ENCODE measurements at regions of chr2 and their contacts with region 1.

Region 1: GRCh38 chr2:234446404-234447076 is 50.3 kb downstream of the ARL4C start:
- DNase-seq: peak; percentile 58 to 89 (median 85)
- ATAC-seq: peak; percentile 92
- H3K4me3 ChIP-seq: peak overlapping the region; percentile 29
- H3K4me3 Mint-ChIP-seq: peak overlapping the region; percentile 71 to 99 (median 86)
- H3K27ac ChIP-seq: peak overlapping the region; percentile 96
- H3K27ac Mint-ChIP-seq: peak overlapping the region; percentile 96 to 100 (median 100)
- H3K4me1 ChIP-seq: peaks cover 57 to 93% of the 10 kb centered on the region in 2 donors
- H3K4me1 Mint-ChIP-seq: peaks cover 60 to 98% (median 89%) of the 10 kb centered on the region in 7 donors
- H3K27me3 ChIP-seq: no peaks in the 10 kb centered on the region
- H3K27me3 Mint-ChIP-seq: no peaks in the 10 kb centered on the region

Region 2: GRCh38 chr2:234044157-234044556 is 402.4 kb before region 1 on chr2:
- CTCF ChIA-PET with region 1: no interaction called
- POLR2A ChIA-PET with region 1: no interaction called
- intact Hi-C with region 1: no loop called
- DNase-seq: no peak
- ATAC-seq: no peak
- H3K4me3 ChIP-seq: no peak overlapping the region
- H3K4me3 Mint-ChIP-seq: no peak overlapping the region
- H3K27ac ChIP-seq: no peak overlapping the region
- H3K27ac Mint-ChIP-seq: no peak overlapping the region
- H3K4me1 ChIP-seq: no peaks in the 10 kb centered on the region
- H3K4me1 Mint-ChIP-seq: peaks cover 0 to 4% (median 0%) of the 10 kb centered on the region in 7 donors
- H3K27me3 ChIP-seq: no peaks in the 10 kb centered on the region
- H3K27me3 Mint-ChIP-seq: peaks cover 0 to 62% (median 0%) of the 10 kb centered on the region in 5 donors

Region 3: GRCh38 chr2:234241656-234242458 is 204.7 kb before region 1 on chr2:
- CTCF ChIA-PET with region 1: no interaction called
- POLR2A ChIA-PET with region 1: no interaction called
- intact Hi-C with region 1: no loop called
- DNase-seq: no peak
- ATAC-seq: no peak
- H3K4me3 ChIP-seq: no peak overlapping the region
- H3K4me3 Mint-ChIP-seq: no peak overlapping the region
- H3K27ac ChIP-seq: no peak overlapping the region
- H3K27ac Mint-ChIP-seq: peak overlapping the region in 1 of 9 donors; percentile 41
- H3K4me1 ChIP-seq: peaks cover 5 to 9% of the 10 kb centered on the region in 2 donors
- H3K4me1 Mint-ChIP-seq: peaks cover 9 to 26% (median 16%) of the 10 kb centered on the region in 7 donors
- H3K27me3 ChIP-seq: no peaks in the 10 kb centered on the region
- H3K27me3 Mint-ChIP-seq: no peaks in the 10 kb centered on the region

Region 4: GRCh38 chr2:234278556-234279255 is 167.8 kb before region 1 on chr2:
- CTCF ChIA-PET with region 1: interaction called, 3 read pairs
- POLR2A ChIA-PET with region 1: interaction called, 270 read pairs
- intact Hi-C with region 1: no loop called
- DNase-seq: peak in 7 of 9 donors; percentile 28 to 77 (median 69)
- ATAC-seq: peak; percentile 81
- H3K4me3 ChIP-seq: no peak overlapping the region
- H3K4me3 Mint-ChIP-seq: peak overlapping the region in 9 of 10 donors; percentile 0 to 64 (median 52)
- H3K27ac ChIP-seq: no peak overlapping the region
- H3K27ac Mint-ChIP-seq: peak overlapping the region; percentile 38 to 90 (median 77)
- H3K4me1 ChIP-seq: peaks cover 16 to 42% of the 10 kb centered on the region in 2 donors
- H3K4me1 Mint-ChIP-seq: peaks cover 27 to 75% (median 59%) of the 10 kb centered on the region in 7 donors
- H3K27me3 ChIP-seq: no peaks in the 10 kb centered on the region
- H3K27me3 Mint-ChIP-seq: no peaks in the 10 kb centered on the region

Region 5: DNA sequence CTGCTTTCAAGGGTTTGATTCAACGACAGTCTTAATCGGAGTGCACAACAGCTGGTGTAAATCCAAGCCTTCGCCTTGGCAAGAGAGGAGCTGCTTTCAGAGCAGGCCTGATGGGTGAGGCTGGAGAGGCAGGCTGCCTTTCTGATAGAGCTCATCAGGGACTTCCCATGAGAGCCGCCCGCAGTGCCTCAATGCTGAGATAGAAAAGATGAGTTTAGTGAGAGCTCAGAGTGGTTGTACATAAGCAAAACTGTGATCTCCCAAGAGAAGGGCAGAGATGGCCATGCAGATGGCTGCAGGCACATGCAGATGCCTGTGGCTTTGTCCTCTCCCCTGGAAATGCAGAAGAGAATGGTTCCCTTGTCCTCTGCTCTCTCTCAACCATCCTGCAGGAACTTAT is 71.8 kb before region 1 on chr2:
- CTCF ChIA-PET with region 1: interaction called, 6 read pairs
- POLR2A ChIA-PET with region 1: interaction called, 22 read pairs
- intact Hi-C with region 1: loop called in 1 of 2 experiments (anchors 1 kb)
- DNase-seq: no peak
- ATAC-seq: no peak
- H3K4me3 ChIP-seq: no peak overlapping the region
- H3K4me3 Mint-ChIP-seq: peak overlapping the region in 2 of 10 donors; percentile 35 to 76
- H3K27ac ChIP-seq: no peak overlapping the region
- H3K27ac Mint-ChIP-seq: peak overlapping the region; percentile 57 to 98 (median 94)
- H3K4me1 ChIP-seq: peaks cover 7 to 47% of the 10 kb centered on the region in 2 donors
- H3K4me1 Mint-ChIP-seq: peaks cover 26 to 74% (median 62%) of the 10 kb centered on the region in 7 donors
- H3K27me3 ChIP-seq: no peaks in the 10 kb centered on the region
- H3K27me3 Mint-ChIP-seq: no peaks in the 10 kb centered on the region

Region 6: GRCh38 chr2:234483568-234484251 is 37.2 kb after region 1 on chr2:
- CTCF ChIA-PET with region 1: interaction called, 19 read pairs
- POLR2A ChIA-PET with region 1: interaction called, 153 read pairs
- intact Hi-C with region 1: no loop called
- DNase-seq: peak; percentile 50 to 88 (median 80)
- ATAC-seq: peak; percentile 89
- H3K4me3 ChIP-seq: peak overlapping the region; percentile 28
- H3K4me3 Mint-ChIP-seq: peak overlapping the region; percentile 60 to 81 (median 67)
- H3K27ac ChIP-seq: peak overlapping the region; percentile 94
- H3K27ac Mint-ChIP-seq: peak overlapping the region; percentile 87 to 99 (median 95)
- H3K4me1 ChIP-seq: peaks cover 63 to 72% of the 10 kb centered on the region in 2 donors
- H3K4me1 Mint-ChIP-seq: peaks cover 44 to 95% (median 84%) of the 10 kb centered on the region in 7 donors
- H3K27me3 ChIP-seq: no peaks in the 10 kb centered on the region
- H3K27me3 Mint-ChIP-seq: no peaks in the 10 kb centered on the region

Region 7: DNA sequence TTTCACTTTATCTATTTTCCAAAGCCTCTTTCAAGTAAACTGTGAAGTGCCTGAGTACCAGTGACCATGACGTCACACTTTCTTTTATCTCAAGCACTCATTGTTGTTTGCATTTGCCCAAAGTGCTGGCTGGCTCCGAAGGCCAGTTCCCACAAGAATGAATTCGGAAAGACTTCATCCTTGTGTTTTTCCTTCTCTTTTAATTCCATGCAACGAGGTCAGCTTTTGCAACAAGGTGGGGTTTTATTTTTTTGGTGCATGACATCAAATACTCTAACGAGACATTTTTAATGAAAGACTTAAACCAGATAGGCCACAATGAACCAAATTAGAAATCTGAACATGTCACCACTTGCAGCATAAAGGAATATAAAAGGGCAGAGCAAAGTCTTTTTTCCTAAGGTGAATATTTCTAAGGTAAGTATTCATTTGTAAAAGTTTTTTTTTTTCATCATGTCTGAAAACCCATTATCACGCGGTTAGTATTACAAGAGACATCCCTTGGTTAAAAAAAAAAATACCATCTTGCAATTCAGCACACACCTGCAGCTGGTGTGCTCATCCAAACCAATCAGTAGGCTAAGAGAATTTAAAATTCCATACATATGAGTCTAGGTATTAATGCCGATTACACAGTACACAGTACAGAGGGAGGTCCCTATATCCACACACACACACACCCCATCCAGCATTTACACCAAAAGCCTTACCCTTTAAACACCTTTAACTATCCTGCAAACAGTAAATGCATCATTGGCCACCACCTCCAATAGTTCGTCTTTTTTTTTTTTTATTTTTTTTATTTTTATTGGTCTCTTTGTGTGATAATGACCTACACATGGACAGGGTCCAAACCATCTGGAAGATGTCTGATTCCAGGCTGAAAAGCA is 48.1 kb after region 1 on chr2:
- CTCF ChIA-PET with region 1: interaction called, 18 read pairs
- POLR2A ChIA-PET with region 1: interaction called, 338 read pairs
- intact Hi-C with region 1: loop called (anchors 1 kb)
- DNase-seq: peak in 7 of 9 donors; percentile 51 to 67 (median 57)
- ATAC-seq: peak; percentile 14
- H3K4me3 ChIP-seq: peak overlapping the region; percentile 95
- H3K4me3 Mint-ChIP-seq: peak overlapping the region; percentile 96 to 100 (median 98)
- H3K27ac ChIP-seq: peak overlapping the region; percentile 94
- H3K27ac Mint-ChIP-seq: peak overlapping the region; percentile 91 to 100 (median 98)
- H3K4me1 ChIP-seq: peaks cover 34 to 46% of the 10 kb centered on the region in 2 donors
- H3K4me1 Mint-ChIP-seq: peaks cover 26 to 50% (median 43%) of the 10 kb centered on the region in 7 donors
- H3K27me3 ChIP-seq: no peaks in the 10 kb centered on the region
- H3K27me3 Mint-ChIP-seq: peaks cover 0 to 5% (median 0%) of the 10 kb centered on the region in 5 donors

Measured in naive thymus-derived CD4-positive, alpha-beta T cell (primary cell).